ENCODE measurements at regions of chr5 and their contacts with region 1.

Region 1: DNA sequence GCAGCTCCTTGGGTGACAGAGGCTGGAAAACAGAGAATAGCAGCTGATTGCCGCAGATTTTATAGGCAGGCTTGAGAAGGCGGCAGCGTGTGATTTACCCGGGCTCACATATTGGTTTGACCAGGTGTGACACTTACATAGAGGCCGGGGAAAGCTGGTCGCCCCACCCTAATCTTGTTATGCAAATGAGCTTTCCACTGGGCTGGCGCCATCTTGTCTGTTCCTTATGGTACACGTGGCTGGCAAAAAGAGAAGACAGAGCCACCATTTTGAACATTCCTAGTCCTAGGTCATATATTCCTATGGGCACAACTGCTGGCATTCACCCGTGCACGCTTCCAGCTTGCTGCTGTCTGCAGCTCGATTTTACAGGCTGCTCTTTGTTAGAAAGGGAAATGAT is 11.3 kb upstream of the SPZ1 start:
- DNase-seq: no peak
- ATAC-seq: no peak
- H3K4me3 Mint-ChIP-seq: no peak overlapping the region
- H3K27ac Mint-ChIP-seq: no peak overlapping the region
- H3K4me1 Mint-ChIP-seq: no peaks in the 10 kb centered on the region
- H3K27me3 Mint-ChIP-seq: no peaks in the 10 kb centered on the region
- CTCF ChIP-seq: no peak

Region 2: DNA sequence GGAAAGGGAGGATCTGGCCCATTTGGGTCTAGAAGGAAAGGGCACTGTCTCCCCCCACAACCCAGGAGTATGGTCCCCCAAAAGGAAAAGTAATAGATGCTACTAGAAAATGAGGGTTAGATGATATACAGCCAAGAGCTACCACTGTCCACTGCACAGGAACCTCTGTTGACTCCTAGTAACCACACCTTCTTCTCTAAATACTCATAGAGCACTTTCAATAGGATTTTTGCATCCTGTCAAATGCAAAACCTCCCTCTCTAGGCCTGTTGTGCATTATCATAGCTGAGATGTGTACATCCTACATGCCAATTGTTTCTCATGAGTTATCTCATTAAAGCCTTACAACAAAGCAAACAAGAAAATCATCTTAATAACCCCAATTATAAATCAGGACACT is 206.5 kb before region 1 on chr5:
- CTCF ChIA-PET with region 1: interaction called, 20 read pairs
- POLR2A ChIA-PET with region 1: no interaction called
- intact Hi-C with region 1: no loop called
- DNase-seq: no peak
- ATAC-seq: peak; percentile 81
- H3K4me3 Mint-ChIP-seq: no peak overlapping the region
- H3K27ac Mint-ChIP-seq: no peak overlapping the region
- H3K4me1 Mint-ChIP-seq: peaks cover 64% of the 10 kb centered on the region
- H3K27me3 Mint-ChIP-seq: no peaks in the 10 kb centered on the region
- CTCF ChIP-seq: no peak

Region 3: DNA sequence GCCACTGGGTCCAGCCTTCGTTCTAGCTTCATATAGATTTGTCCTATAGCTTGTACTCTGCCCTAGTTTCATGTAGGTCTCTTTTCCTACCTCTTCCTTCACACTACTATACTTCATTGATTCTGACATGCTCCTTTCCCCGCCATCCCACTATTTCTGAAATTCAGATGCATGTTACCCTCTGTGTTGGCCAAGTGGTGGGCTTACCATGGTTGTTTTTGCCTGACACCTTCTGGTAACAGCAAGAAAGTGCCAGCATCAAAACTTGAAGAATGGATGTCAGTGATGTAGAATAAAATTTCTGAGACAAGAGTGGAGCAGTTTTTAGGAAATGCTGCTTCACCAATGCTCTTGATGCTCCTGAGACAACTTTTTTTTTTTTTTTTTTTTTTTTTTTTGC is 33.2 kb before region 1 on chr5:
- CTCF ChIA-PET with region 1: interaction called, 19 read pairs
- POLR2A ChIA-PET with region 1: no interaction called
- intact Hi-C with region 1: no loop called
- DNase-seq: peak; percentile 53
- ATAC-seq: peak; percentile 73
- H3K4me3 Mint-ChIP-seq: no peak overlapping the region
- H3K27ac Mint-ChIP-seq: peak overlapping the region; percentile 36
- H3K4me1 Mint-ChIP-seq: peaks cover 17% of the 10 kb centered on the region
- H3K27me3 Mint-ChIP-seq: no peaks in the 10 kb centered on the region
- CTCF ChIP-seq: peak; percentile 56

Region 4: DNA sequence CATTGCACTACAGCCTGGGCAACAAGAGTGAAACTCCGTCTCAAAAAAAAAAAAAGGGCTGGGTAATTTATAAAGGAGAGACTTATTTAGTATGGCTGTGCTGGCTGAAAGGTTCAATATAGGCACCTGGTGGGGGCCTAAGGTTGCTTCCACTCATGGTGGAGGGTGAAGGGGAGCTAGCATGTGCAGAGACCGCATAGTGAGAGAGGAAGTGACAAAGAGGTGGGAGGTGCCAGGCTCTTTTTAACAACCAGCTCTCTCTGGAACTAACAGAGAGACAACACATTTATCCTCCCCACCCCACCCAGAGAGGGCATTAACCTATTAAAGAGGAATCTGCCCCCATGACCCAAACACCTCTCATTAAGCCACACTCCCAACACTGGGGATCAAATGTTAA is 23.8 kb before region 1 on chr5:
- CTCF ChIA-PET with region 1: interaction called, 12 read pairs
- POLR2A ChIA-PET with region 1: interaction called, 3 read pairs
- intact Hi-C with region 1: no loop called
- DNase-seq: peak; percentile 70
- ATAC-seq: peak; percentile 92
- H3K4me3 Mint-ChIP-seq: no peak overlapping the region
- H3K27ac Mint-ChIP-seq: peak overlapping the region; percentile 90
- H3K4me1 Mint-ChIP-seq: peaks cover 21% of the 10 kb centered on the region
- H3K27me3 Mint-ChIP-seq: no peaks in the 10 kb centered on the region
- CTCF ChIP-seq: no peak

Region 5: DNA sequence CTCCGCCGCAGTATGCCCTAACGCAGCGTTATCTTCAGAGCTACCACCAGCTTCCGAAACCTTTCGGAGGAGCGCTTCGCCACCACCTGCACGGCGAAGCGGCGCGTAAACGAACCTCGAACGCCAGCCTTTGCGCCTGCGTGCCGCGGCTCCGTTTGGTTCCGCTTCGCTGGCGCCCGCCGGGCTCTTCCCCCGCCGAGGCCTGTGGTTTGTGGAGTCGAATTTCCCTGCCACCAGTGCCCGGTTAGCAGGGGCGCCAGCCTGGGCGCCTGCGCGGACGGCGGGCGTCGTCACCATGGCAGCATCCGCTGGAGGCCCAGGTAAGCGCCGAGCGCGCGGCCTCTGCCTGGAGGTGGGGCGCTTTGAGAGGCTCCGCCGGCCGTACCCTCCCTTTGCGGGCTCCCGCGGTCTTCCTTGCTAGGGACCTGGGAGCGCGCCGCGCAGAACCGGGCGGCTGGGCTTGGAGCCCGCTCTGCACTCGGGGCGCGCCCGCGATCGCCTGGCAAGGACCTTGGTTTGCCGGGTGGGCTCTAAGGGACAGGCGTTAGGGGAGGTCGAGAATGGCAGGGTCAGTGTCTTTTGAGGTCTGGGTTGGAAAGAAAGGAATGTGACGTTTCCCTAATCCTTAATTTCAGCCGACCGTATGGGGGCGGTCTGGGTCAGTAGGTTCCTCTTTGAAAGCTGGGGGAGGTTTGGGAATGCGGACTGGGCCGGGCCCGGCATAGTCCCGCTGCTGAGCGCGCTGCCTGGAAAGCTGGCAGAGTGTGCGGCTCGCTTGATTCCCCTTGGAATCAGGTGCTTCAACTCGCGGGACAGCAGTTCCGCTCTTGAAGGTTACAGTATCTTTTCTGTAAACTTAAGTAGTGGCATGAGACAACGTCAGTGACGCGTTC is 179.5 kb after region 1 on chr5 and contains the start of gene FAM151B:
- CTCF ChIA-PET with region 1: no interaction called
- POLR2A ChIA-PET with region 1: no interaction called
- intact Hi-C with region 1: no loop called
- DNase-seq: peak; percentile 77
- ATAC-seq: peak; percentile 96
- H3K4me3 Mint-ChIP-seq: peak within 1 kb of the TSS; percentile 71
- H3K27ac Mint-ChIP-seq: no peak within 1 kb of the TSS
- H3K4me1 Mint-ChIP-seq: peaks cover 10% of the 10 kb centered on the region
- H3K27me3 Mint-ChIP-seq: peaks cover 22% of the 10 kb centered on the region
- CTCF ChIP-seq: no peak
- total RNA-seq, gene FAM151B: 0.25 TPM in 1 of 2 experiments, not detected in the other